ENCODE measurements at regions of chr17 and their contacts with region 1.

Region 1: DNA sequence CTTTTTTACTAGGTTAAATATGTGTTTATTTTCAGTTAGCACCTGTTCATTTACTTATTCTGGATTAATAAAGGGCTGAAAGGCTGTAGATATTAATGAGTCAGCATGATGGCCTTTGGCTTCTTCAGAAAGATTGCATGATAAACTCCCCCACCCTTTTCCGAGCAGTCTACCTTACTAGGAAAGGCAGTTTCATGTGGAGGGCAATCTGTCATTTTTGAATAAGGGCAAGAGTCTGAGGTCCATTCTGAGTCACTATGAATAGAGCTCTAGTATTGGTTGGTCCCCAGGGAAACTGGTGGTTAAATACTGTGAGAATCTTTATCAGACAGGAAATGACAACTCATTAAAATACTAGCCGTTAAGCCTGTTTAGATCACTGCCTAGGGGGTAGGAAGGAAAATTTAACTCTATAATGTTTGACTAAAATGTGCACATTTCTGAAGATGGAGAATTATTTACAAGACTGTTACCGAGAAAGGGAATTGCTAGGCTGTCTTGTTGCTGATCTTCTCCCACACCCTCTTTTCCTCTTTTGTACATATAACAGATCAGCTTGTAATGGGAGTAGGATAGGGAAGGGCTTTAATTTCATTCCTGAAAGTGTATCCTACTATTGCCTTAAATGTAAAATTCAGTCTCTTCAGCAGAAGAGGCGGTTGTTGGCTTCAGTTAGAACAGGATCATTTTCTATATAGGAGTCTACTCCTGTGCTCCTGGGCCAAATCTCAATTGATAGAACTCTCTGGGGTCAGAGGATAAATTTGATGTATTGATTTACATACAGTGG is 63.3 kb downstream of the TUBD1 start:
- DNase-seq: peak; percentile 100
- ATAC-seq: peak; percentile 71
- H3K4me3 ChIP-seq: peak overlapping the region; percentile 65
- H3K27ac ChIP-seq: peak overlapping the region; percentile 98
- H3K4me1 ChIP-seq: peaks cover 88% of the 10 kb centered on the region
- H3K27me3 ChIP-seq: no peaks in the 10 kb centered on the region
- CTCF ChIP-seq: no peak
- EP300 ChIP-seq: peak; percentile 97 to 99
- POLR2A ChIP-seq: peak; percentile 42; the same call in 1 of the 2 replicates
- RAD21 ChIP-seq: peak; percentile 18; the same call in 1 of the 2 replicates

Region 2: GRCh38 chr17:59811775-59812538 is 17.5 kb before region 1 on chr17:
- CTCF ChIA-PET with region 1: interaction called, 10 read pairs
- POLR2A ChIA-PET with region 1: interaction called, 25 read pairs
- RAD21 ChIA-PET with region 1: interaction called, 6 read pairs
- SMC1A ChIA-PET with region 1: interaction called, 36 read pairs
- in situ Hi-C with region 1: no loop called
- intact Hi-C with region 1: no loop called
- DNase-seq: no peak
- ATAC-seq: peak; percentile 63
- H3K4me3 ChIP-seq: no peak overlapping the region
- H3K27ac ChIP-seq: no peak overlapping the region
- H3K4me1 ChIP-seq: peaks cover 5% of the 10 kb centered on the region; the same call in 1 of the 2 replicates
- H3K27me3 ChIP-seq: no peaks in the 10 kb centered on the region
- CTCF ChIP-seq: no peak
- EP300 ChIP-seq: no peak
- POLR2A ChIP-seq: no peak
- RAD21 ChIP-seq: no peak

Region 3: DNA sequence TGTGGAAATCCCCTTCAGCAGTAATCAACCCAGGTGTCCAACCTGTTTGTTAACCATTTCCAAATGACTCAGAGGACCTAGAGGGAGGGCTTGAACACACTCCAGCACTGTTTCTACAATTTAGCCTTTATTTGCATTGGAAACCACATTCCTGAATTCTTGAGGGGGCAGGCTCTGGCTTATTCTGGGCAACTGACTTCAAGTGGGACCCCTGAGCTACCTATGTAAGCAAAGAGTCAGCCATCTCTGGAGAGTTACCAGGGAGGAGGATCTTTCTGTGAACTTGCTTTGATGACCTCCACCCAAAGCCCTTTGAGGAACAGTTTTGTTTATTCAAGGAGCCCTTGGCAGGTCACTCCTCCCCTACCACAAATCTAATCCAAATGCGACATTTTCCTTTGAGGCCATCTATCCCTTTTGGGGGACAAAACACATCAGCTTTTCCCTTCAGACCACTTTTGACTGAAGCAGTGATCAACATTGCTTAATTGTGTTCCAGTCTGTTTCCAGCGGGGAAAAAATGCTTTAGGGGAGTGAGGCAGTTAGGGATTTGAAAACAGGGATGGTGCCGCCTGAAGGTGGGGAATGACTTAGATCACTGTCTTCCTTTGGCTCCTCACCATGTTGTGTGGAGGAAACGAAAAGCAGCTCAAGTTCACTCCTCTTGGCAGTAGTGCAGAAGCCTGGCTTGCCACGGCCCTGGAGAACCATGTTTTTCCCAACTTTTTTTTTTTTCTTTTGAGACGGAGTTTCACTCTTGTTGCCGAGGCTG is 17.2 kb after region 1 on chr17:
- CTCF ChIA-PET with region 1: interaction called, 9 read pairs
- POLR2A ChIA-PET with region 1: interaction called, 332 read pairs
- RAD21 ChIA-PET with region 1: interaction called, 149 read pairs
- SMC1A ChIA-PET with region 1: interaction called, 129 read pairs
- in situ Hi-C with region 1: no loop called
- intact Hi-C with region 1: no loop called
- DNase-seq: peak; percentile 91
- ATAC-seq: peak; percentile 54
- H3K4me3 ChIP-seq: peak overlapping the region; percentile 28; the same call in 1 of the 2 replicates
- H3K27ac ChIP-seq: peak overlapping the region; percentile 68
- H3K4me1 ChIP-seq: peaks cover 55% of the 10 kb centered on the region
- H3K27me3 ChIP-seq: no peaks in the 10 kb centered on the region
- CTCF ChIP-seq: no peak
- EP300 ChIP-seq: peak; percentile 65 to 76
- POLR2A ChIP-seq: no peak
- RAD21 ChIP-seq: no peak